CD4-positive, alpha-beta memory T cell (primary cell): ENCODE measurements at regions of chr2 and their contacts with region 1.

Region 1: GRCh38 chr2:12456293-12457151 is 260.2 kb upstream of the TRIB2 start:
- DNase-seq: peak; percentile 52 to 69 (median 58)
- H3K4me3 ChIP-seq: peak overlapping the region; percentile 15 to 49
- H3K4me3 Mint-ChIP-seq: peak overlapping the region; percentile 76 to 90 (median 82)
- H3K27ac ChIP-seq: peak overlapping the region; percentile 48
- H3K27ac Mint-ChIP-seq: peak overlapping the region; percentile 87 to 96 (median 94)
- H3K4me1 ChIP-seq: peaks cover 37% of the 10 kb centered on the region
- H3K4me1 Mint-ChIP-seq: peaks cover 29 to 46% (median 35%) of the 10 kb centered on the region in 4 donors
- H3K27me3 ChIP-seq: no peaks in the 10 kb centered on the region
- H3K27me3 Mint-ChIP-seq: no peaks in the 10 kb centered on the region

Region 2: DNA sequence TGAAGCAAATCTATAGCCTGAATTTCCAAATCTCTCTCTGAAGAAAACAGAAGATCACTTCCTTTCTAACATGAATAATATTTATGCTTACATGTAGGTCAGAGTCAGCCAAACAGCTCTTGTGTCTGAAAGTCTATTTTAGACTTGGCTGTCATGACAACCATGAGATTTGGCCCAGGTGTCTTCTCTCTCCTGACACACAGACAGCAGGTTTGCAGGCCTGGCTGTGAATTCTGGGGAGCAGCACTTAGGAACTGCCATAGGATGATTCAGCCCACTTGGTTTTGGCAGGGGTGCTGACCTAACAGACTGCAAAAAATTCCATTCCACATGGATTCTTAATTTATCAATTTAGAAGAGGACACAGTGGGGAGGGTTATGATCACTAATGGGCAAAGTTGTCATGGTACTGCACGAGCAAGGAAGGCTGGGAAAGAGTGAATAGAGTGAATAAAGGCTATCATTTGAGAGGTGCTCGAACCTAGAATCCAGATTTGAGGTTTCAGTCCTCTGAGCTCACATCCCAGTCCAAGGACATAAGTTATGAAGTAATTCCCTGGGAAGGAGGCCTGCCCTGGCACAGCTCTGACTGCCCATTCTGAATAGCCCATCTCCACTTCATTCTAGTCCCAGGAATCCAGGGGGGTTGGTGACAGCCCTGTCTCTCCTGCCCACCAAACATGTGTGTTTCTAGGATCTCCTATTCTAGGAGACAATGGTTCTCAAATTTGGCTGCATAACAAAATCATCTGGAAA is 193.7 kb before region 1 on chr2:
- CTCF ChIA-PET with region 1: no interaction called
- POLR2A ChIA-PET with region 1: no interaction called
- intact Hi-C with region 1: no loop called
- DNase-seq: peak in 3 of 5 donors; percentile 7 to 41 (median 31)
- H3K4me3 ChIP-seq: no peak overlapping the region
- H3K4me3 Mint-ChIP-seq: peak overlapping the region in 3 of 8 donors; percentile 7 to 27 (median 9)
- H3K27ac ChIP-seq: no peak overlapping the region
- H3K27ac Mint-ChIP-seq: peak overlapping the region; percentile 32 to 93 (median 77)
- H3K4me1 ChIP-seq: peaks cover 36% of the 10 kb centered on the region
- H3K4me1 Mint-ChIP-seq: peaks cover 31 to 43% (median 37%) of the 10 kb centered on the region in 4 donors
- H3K27me3 ChIP-seq: no peaks in the 10 kb centered on the region
- H3K27me3 Mint-ChIP-seq: peaks cover 0 to 2% of the 10 kb centered on the region in 2 donors

Region 3: GRCh38 chr2:12442476-12442847 is 14.1 kb before region 1 on chr2:
- CTCF ChIA-PET with region 1: interaction called, 5 read pairs
- POLR2A ChIA-PET with region 1: interaction called, 11 read pairs
- intact Hi-C with region 1: no loop called
- DNase-seq: peak in 1 of 5 donors; percentile 12
- H3K4me3 ChIP-seq: no peak overlapping the region
- H3K4me3 Mint-ChIP-seq: peak overlapping the region in 4 of 8 donors; percentile 7 to 56 (median 32)
- H3K27ac ChIP-seq: no peak overlapping the region
- H3K27ac Mint-ChIP-seq: peak overlapping the region in 3 of 7 donors; percentile 71 to 77 (median 74)
- H3K4me1 ChIP-seq: peaks cover 27% of the 10 kb centered on the region
- H3K4me1 Mint-ChIP-seq: peaks cover 19 to 37% (median 24%) of the 10 kb centered on the region in 4 donors
- H3K27me3 ChIP-seq: no peaks in the 10 kb centered on the region
- H3K27me3 Mint-ChIP-seq: no peaks in the 10 kb centered on the region

Region 4: GRCh38 chr2:12486205-12487118 is 29.9 kb after region 1 on chr2:
- CTCF ChIA-PET with region 1: interaction called, 4 read pairs
- POLR2A ChIA-PET with region 1: interaction called, 14 read pairs
- intact Hi-C with region 1: no loop called
- DNase-seq: no peak
- H3K4me3 ChIP-seq: no peak overlapping the region
- H3K4me3 Mint-ChIP-seq: peak overlapping the region in 7 of 8 donors; percentile 13 to 89 (median 81)
- H3K27ac ChIP-seq: no peak overlapping the region
- H3K27ac Mint-ChIP-seq: peak overlapping the region; percentile 79 to 95 (median 92)
- H3K4me1 ChIP-seq: peaks cover 77% of the 10 kb centered on the region
- H3K4me1 Mint-ChIP-seq: peaks cover 57 to 69% (median 67%) of the 10 kb centered on the region in 4 donors
- H3K27me3 ChIP-seq: no peaks in the 10 kb centered on the region
- H3K27me3 Mint-ChIP-seq: no peaks in the 10 kb centered on the region